Right ventricle myocardium inferior (tissue), 1 donor: ENCODE measurements at regions of chr20 and their contacts with region 1.

Region 1: DNA sequence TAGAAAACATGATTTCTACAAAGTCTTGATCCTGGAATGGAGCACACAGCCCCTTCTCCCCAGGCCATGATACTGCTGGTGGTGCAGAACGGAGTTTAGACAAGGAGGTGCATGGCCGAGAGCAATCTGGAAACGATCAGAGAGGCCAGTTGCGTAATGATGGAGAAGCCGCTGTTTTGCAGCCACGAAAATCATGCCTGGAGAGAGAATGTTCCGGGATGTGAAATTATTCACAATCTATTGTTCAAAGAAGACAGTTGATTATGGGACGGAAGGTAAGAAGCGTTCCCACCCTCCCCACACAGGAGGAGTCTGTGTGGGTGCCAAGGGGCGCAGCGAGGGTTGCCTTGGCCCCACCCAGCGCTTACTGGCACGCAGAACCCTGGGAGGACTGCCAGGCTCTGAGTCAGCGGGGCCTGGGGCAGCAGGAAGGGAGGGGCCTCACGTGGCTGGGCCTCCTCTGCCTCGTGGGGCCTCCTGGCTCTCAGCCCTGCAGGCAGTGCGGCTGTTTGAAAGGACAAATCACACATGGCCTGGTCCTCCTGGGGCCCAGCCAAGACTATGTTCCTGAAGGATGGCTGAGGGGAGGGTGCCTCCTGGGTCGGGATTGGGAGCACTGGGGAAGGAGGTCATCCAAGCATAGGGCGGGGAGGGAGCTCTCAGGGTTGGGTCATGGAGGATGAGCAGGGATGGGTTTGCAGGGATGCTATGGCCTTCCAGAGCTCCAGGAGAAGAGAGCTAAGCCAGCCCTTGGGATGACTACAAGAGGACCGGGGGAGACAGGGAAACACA is 8.7 kb upstream of the AP5S1 start:
- DNase-seq: peak; percentile 99
- ATAC-seq: peak; percentile 90

Region 2: DNA sequence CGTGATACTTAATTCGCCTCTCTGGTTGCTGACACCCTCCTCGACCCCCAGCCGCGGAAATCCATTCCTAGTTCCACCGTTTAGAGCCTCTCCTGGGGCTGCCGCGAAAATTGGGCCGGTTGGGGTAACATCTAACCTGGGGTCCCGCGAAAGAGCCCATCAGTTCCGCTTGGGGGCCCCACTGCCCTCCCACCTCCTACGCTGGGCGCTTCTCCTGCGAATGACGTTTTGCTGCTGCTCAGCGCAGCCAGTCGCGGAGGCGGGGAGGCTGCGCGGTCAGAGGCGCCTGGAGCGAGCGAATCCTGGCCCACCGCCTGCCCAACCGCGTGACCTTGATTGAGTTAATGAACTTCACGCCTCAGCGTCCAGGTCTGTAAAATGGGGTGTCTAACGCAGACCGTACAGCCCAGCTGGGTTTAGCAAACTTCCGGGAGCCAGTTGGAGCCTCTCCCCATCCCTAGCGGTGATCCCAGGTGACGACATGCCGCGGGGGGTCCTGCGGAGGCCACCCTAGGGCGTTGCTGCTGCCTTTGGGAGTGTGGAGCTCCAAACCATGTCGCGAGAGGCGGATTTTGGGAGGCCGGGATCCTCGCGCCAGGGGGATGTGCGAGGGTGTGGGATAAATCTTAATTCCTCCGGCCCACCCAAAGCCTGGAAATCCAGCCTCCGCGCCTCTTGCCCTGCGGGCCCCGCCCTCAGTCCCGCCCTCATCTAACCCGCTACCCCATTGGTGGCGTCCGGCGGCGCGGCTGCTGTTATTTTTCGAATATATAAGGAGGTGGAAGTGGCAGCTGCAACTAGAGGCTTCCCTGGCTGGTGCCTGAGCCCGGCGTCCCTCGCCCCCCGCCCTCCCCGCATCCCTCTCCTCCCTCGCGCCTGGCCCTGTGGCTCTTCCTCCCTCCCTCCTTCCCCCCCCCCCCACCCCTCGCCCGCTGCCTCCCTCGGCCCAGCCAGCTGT is 15.9 kb before region 1 on chr20 and contains the start of gene CDC25B:
- intact Hi-C with region 1: loop called (anchors 2 kb)
- DNase-seq: peak; percentile 97
- ATAC-seq: peak; percentile 95
- total RNA-seq, gene CDC25B: 10.1 TPM